ENCODE measurements at regions of chr6 and their contacts with region 1.

Region 1: DNA sequence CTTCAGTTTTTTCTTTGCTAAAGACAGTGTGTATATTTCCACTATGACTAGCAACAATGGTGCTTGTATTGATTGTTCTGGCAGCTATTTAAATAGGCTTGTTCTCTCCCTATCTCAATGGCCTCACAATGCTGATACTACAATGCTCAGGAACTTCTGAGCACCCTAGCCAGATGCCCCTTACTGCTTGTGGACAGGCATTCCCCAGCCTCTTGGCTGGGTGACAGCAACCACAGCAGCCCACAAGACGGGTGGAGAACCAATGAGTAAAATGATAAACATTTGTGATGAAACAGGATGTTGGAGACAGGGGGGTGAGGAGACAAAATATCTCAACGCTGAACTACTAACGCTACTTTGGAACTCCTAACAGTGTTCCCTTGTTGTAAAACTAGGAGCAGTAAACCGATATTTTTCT is 42.3 kb downstream of the HIVEP2 start:
- DNase-seq: peak; percentile 96
- H3K4me3 ChIP-seq: no peak overlapping the region; the same call in 1 of the 2 replicates
- CTCF ChIP-seq: no peak

Region 2: GRCh38 chr6:142885182-142885867 is 17.3 kb before region 1 on chr6:
- CTCF ChIA-PET with region 1: interaction called, 14 read pairs
- POLR2A ChIA-PET with region 1: no interaction called
- DNase-seq: peak; percentile 95
- H3K4me3 ChIP-seq: peak overlapping the region; percentile 55
- CTCF ChIP-seq: no peak